Activated naive CD4-positive, alpha-beta T cell treated with anti-CD3 and anti-CD28 coated beads for 36 hours (primary cell): ENCODE measurements at regions of chr4 and their contacts with region 1.

Region 1: DNA sequence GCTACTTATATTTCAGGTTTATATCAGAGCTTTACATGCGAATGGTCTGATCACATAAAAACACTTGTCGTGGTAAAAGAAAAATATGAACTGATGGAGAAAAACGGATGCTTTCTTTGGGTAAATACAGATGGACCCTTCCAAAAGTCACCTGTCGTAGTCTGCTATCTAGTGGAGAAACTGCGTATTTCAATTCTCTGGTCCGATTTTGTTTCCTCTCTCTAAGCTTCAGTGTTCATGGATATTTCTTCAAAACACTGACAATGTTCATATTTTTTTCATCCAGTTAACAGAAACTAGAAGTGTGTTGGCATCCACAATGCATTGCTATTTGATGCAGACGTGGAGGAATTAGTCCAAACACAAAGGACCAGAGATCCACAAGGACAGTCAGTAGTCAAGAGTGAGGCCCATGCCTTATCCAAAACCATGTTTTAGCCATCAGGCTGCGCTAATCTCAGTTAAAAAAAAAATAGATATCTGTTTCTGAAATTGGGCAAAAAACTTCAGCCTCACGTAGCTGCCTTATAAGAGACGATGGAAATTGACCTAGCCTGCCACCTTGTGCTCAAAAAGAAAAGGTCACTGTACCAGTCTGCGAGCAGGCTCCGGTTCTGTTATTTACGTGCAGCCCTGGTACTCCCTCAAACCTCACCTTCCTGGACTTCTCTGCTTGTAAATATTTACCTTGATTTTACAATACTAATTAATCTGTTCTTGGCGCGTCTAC is 16.0 kb downstream of the MEPE start:
- DNase-seq: peak; percentile 65
- H3K4me3 Mint-ChIP-seq: peak overlapping the region; percentile 28
- H3K27ac Mint-ChIP-seq: no peak overlapping the region
- H3K4me1 Mint-ChIP-seq: peaks cover 5% of the 10 kb centered on the region
- H3K27me3 Mint-ChIP-seq: peaks cover 22% of the 10 kb centered on the region

Region 2: GRCh38 chr4:86497980-86498862 is 1350.6 kb before region 1 on chr4:
- CTCF ChIA-PET with region 1: no interaction called
- intact Hi-C with region 1: loop called (anchors 10 kb)
- DNase-seq: no peak
- H3K4me3 Mint-ChIP-seq: no peak overlapping the region
- H3K27ac Mint-ChIP-seq: no peak overlapping the region
- H3K4me1 Mint-ChIP-seq: no peaks in the 10 kb centered on the region
- H3K27me3 Mint-ChIP-seq: peaks cover 6% of the 10 kb centered on the region

Region 3: DNA sequence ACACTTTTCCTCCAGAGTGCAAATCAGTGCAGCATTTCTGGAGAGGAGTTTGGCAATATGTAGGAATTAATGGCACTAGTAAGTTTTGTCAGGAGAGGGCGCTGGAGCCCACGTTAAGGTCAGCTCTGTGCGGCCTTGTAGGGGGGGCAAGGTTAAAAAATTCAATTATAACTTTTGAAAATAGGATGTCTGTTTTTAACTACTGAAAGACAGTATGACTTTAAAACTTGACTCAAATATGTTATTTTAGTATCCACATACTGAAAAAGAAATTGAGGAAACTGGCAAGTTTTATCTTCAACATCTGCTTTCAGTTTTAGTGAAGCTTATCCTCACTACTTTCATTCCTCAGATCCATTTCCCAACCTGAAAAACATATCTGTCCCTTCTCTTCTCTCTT is 495.2 kb before region 1 on chr4:
- CTCF ChIA-PET with region 1: no interaction called
- intact Hi-C with region 1: loop called (anchors 5 kb)
- DNase-seq: peak; percentile 50
- H3K4me3 Mint-ChIP-seq: no peak overlapping the region
- H3K27ac Mint-ChIP-seq: no peak overlapping the region
- H3K4me1 Mint-ChIP-seq: no peaks in the 10 kb centered on the region
- H3K27me3 Mint-ChIP-seq: no peaks in the 10 kb centered on the region

Region 4: DNA sequence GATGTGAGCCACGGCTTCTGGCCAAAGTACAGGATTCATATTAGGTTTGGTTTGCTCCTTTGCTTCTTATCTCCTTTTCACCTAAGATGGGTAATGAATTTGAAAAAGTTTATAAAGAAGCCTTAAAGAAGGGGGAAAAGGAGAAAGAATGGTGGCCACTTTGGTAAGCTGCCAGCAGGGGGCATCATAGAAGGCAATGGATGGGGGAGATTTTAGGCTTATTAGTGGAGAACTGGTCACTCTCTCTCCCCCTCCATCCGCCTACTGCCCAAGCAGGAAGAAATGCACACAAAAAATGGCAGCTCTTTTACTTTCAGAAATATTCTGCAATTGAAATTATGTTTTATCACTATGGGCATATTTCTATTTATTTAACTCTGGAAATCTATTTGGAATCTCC is 351.6 kb before region 1 on chr4:
- CTCF ChIA-PET with region 1: interaction called, 3 read pairs
- intact Hi-C with region 1: loop called (anchors 2 kb)
- DNase-seq: peak; percentile 44
- H3K4me3 Mint-ChIP-seq: no peak overlapping the region
- H3K27ac Mint-ChIP-seq: no peak overlapping the region
- H3K4me1 Mint-ChIP-seq: peaks cover 3% of the 10 kb centered on the region
- H3K27me3 Mint-ChIP-seq: no peaks in the 10 kb centered on the region

Region 5: DNA sequence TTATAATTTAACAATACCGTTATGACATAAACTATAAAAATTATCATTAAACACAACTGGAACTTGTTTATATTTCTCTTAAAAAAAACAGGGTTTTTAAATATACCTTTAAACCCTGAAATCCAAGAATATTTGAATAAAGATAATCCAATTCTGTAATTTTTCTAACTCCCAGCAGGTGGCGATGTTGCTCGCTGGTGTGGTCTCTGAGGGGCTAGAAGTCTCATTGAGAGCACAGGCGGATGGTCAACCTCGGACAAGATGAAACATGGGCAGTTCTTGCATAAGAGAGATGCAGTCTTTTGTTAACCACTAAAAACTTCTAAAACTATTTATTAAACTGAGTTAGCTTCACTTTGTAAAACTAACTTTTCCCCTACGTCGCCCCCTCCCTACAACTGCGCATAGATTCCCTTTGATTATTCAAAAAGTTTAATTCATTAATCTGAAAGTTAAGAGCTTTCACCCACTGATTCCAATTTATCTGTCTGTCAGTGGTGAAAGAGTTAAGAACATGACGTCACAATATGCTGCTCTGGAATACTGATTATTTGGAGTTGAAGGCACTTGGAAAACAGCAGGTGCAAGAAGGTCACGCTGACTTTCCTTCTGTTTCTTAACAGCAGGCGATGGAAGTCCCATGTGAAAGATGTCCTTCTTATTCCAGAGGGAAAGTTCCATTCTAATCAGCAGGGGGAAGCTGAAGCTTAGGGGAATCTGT is 169.2 kb before region 1 on chr4:
- CTCF ChIA-PET with region 1: interaction called, 56 read pairs
- intact Hi-C with region 1: loop called (anchors 1 kb)
- DNase-seq: peak; percentile 37
- H3K4me3 Mint-ChIP-seq: no peak overlapping the region
- H3K27ac Mint-ChIP-seq: no peak overlapping the region
- H3K4me1 Mint-ChIP-seq: no peaks in the 10 kb centered on the region
- H3K27me3 Mint-ChIP-seq: peaks cover 1% of the 10 kb centered on the region

Region 6: DNA sequence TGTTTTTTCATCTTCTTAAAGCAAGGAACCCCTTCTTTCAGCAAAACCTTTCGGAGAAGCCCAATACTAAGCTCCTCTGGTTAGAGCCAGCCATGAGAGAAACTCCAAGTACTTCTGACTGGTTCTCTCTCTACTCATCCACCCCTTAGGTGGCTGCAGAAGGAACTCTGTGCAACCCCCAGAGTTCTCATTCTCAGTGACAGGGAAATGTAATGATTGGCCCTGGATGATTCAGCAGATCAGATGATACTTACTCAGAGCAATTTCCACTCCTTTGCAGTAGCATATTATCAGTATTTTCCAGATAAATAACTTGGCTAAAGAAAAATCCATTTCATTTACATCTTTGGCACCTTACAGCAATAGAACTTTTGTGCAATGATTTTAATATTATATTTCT is 129.9 kb after region 1 on chr4:
- CTCF ChIA-PET with region 1: interaction called, 25 read pairs
- intact Hi-C with region 1: loop called (anchors 1 kb)
- DNase-seq: no peak
- H3K4me3 Mint-ChIP-seq: no peak overlapping the region
- H3K27ac Mint-ChIP-seq: no peak overlapping the region
- H3K4me1 Mint-ChIP-seq: peaks cover 5% of the 10 kb centered on the region
- H3K27me3 Mint-ChIP-seq: peaks cover 25% of the 10 kb centered on the region

Region 7: GRCh38 chr4:88211473-88212252 is 362.9 kb after region 1 on chr4:
- CTCF ChIA-PET with region 1: interaction called, 9 read pairs
- intact Hi-C with region 1: loop called (anchors 1 kb)
- DNase-seq: peak; percentile 66
- H3K4me3 Mint-ChIP-seq: no peak overlapping the region
- H3K27ac Mint-ChIP-seq: no peak overlapping the region
- H3K4me1 Mint-ChIP-seq: no peaks in the 10 kb centered on the region
- H3K27me3 Mint-ChIP-seq: no peaks in the 10 kb centered on the region